Right ventricle myocardium inferior (tissue), 1 donor: ENCODE measurements at regions of chr3 and their contacts with region 1.

Region 1: GRCh38 chr3:11236595-11237461 is 35.4 kb upstream of the ATG7 start:
- DNase-seq: peak; percentile 70
- ATAC-seq: no peak

Region 2: DNA sequence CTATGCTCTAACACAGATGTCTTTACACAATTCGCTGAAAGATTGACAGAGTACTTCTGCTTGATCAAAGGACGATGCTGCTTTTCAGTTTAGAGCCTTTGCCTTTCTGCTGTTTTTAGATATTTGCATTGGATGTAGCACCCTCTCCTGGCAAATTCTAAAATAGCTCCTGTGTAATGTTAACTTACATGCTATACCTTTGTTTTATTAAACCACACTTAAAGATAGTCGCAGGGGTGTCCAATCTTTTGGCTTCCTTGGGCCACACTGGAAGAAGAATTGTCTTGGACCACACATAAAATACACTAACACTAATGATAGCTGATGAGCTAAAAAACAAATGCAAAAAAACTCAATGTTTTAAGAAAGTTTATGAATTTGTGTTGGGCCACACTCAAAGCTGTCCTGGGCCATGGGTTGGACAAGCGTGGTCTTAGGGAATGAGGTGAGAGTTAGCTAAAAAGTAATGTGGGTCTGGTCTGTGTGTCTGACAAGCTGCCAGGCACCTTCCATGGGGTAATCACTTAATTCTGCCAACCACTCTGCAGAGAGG is 98.3 kb after region 1 on chr3:
- intact Hi-C with region 1: loop called (anchors 1 kb)
- DNase-seq: no peak
- ATAC-seq: peak; percentile 67